ENCODE measurements at regions of chr7 and their contacts with region 1.

Region 1: DNA sequence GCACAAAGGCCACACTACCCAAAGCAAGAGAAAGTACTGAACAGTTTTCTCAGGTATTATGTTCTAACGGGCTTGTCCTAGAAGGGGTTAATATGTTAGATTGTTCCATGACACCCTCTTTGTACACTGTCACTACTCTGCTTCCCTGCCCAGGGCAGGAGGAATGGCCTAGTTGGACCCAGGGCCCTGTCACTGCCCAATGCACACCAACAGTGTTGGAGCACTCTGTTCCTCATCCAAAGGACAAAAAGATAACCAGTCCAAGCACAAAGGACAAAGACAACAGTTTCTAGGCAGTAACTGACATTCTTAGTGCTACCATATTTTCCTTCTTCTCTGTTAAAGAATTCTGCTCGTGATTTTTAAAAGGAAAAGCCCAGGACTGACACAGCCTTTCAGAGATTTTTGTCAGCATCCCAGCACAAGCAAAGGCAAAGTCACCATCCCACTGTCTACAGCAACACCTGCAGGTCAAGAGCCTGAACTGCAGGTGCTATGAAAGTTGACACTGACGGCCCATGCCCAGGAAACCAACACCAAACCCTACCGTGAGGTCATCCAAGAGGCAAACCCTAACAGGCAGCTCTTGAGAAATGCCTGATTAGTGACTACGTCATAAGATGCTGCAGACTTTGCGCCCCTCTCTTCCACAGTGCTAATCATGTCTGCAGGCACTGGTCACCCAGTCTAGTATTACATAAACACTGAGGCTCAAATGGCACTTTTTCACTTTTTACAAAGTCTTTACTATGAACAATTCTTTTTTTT is 13.2 kb downstream of the NUDCD3 start:
- DNase-seq: peak; percentile 53 to 72 (median 68)
- ATAC-seq: peak; percentile 95 to 99 (median 98)
- H3K4me3 ChIP-seq: no peak overlapping the region
- H3K27ac ChIP-seq: peak overlapping the region in 1 of 3 donors; percentile 10
- H3K4me1 ChIP-seq: peaks cover 0 to 21% (median 6%) of the 10 kb centered on the region in 4 donors
- H3K27me3 ChIP-seq: no peaks in the 10 kb centered on the region
- CTCF ChIP-seq: peak; percentile 93 to 96 (median 95)
- POLR2A ChIP-seq: no peak

Region 2: DNA sequence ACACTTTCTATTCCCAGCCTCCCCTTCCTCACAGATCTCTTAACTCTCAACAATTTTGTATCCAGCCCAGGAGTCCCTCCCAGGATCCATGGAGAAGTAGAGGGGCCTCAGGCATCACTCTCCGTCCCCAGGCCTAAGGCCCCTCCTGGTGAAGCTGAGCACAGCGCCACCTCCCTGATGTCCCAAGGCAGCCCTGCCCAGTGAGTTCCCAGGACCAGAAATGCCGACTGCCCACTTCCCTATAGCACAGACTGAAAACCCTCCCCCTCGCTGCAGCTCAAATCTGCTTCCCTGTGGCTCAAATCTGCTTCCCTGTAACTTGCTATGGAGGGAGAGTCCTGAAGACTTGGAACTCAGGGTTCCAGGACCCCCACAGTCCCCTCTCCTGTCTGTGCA is 240.9 kb before region 1 on chr7:
- intact Hi-C with region 1: loop called in 1 of 2 experiments (anchors 5 kb)
- DNase-seq: no peak
- ATAC-seq: no peak
- H3K4me3 ChIP-seq: no peak overlapping the region
- H3K27ac ChIP-seq: no peak overlapping the region
- H3K4me1 ChIP-seq: no peaks in the 10 kb centered on the region
- H3K27me3 ChIP-seq: no peaks in the 10 kb centered on the region
- CTCF ChIP-seq: no peak
- POLR2A ChIP-seq: no peak

Region 3: DNA sequence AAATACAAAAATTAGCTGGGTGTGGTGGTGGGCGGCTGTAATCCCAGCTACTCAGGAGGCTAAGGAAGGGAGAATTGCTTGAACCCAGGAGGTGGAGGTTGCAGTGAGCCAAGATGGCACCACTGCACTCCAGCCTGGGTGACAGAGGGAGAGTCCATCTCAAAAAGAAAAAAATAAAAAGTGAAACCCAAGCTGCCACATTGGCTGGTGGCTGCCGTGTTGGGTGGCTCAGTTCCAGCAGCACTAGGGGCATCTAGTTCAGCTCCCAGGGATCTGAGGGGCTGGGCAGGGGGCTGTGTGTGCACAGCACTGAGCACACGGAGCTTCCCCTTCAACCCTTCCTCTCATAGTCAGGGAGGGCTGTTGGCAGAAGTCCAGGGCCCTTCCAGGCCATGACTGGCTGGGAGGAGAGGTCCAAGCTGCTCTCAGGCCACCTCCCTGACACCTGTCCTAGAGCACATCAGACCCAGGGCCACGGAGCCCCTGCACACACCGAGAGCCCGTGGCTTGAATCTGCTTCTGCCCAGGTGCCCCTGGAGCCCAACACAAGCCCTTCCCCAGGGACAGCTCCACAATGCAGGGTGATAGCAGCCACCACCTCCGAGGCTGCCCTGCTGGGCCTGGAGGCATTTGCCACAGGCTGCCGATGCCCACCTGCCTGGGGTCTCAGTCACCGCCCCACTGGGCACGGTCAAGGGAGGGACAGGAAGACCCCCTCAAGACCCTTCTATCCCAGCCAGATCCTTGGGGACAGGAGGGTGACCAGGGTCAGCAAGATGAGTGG is 229.2 kb before region 1 on chr7:
- intact Hi-C with region 1: loop called in 1 of 2 experiments (anchors 5 kb)
- DNase-seq: no peak
- ATAC-seq: no peak
- H3K4me3 ChIP-seq: no peak overlapping the region
- H3K27ac ChIP-seq: no peak overlapping the region
- H3K4me1 ChIP-seq: no peaks in the 10 kb centered on the region
- H3K27me3 ChIP-seq: no peaks in the 10 kb centered on the region
- CTCF ChIP-seq: no peak
- POLR2A ChIP-seq: no peak

Region 4: GRCh38 chr7:44638611-44639557 is 161.6 kb after region 1 on chr7:
- intact Hi-C with region 1: no loop called
- DNase-seq: peak; percentile 60 to 67 (median 67)
- ATAC-seq: peak; percentile 66 to 78 (median 68)
- H3K4me3 ChIP-seq: no peak overlapping the region
- H3K27ac ChIP-seq: peak overlapping the region; percentile 44 to 72 (median 50)
- H3K4me1 ChIP-seq: peaks cover 0 to 26% (median 6%) of the 10 kb centered on the region in 4 donors
- H3K27me3 ChIP-seq: no peaks in the 10 kb centered on the region
- CTCF ChIP-seq: no peak
- POLR2A ChIP-seq: no peak

Region 5: GRCh38 chr7:44727158-44727933 is 250.1 kb after region 1 on chr7:
- intact Hi-C with region 1: no loop called
- DNase-seq: no peak
- ATAC-seq: peak; percentile 57 to 77 (median 67)
- H3K4me3 ChIP-seq: no peak overlapping the region
- H3K27ac ChIP-seq: no peak overlapping the region
- H3K4me1 ChIP-seq: no peaks in the 10 kb centered on the region
- H3K27me3 ChIP-seq: no peaks in the 10 kb centered on the region
- CTCF ChIP-seq: no peak
- POLR2A ChIP-seq: no peak

Measured in right lobe of liver (tissue), 6 donors.